B cell (primary cell): ENCODE measurements at regions of chr11 and their contacts with region 1.

Region 1: DNA sequence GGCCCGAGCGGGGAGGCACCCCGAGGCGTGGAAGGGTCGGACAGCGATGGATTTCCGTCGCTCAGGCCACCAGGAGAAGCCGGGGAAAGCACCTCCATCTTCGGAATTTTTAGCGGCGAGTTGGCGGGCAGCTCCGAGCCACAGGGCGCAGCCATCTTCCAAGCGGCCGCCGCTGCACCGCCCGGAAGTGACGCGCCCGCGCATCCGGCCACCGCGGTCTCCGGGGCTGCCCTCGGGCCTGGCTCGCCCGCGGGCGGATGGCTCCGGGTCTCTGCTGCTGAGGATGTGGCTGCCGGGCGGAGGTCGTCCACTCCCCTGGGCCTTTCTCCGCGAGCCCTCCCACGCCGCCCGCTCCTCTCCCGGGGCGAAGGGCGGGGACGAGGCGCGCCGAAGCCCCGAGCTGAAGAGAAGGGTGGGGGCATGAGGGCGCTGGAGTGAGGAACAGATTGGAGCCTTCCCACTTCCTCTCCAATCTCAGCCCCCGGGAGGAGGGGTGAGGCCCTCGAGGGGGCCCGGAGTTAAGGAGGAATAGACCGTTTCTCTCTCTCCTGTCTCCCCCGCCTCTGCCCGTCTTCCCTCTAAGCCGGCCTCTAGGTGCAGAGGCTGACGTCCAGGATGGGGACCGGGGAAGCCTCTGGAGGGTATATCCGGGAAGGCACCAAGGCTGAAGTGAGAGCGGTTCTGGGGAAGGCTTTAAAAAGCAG is at the start of gene MSANTD2:
- DNase-seq: peak; percentile 89
- ATAC-seq: peak; percentile 84
- H3K4me3 ChIP-seq: peak within 1 kb of the TSS; percentile 57 to 95 (median 91)
- H3K4me3 Mint-ChIP-seq: peak within 1 kb of the TSS; percentile 94
- H3K27ac ChIP-seq: peak within 1 kb of the TSS; percentile 96 to 99
- H3K27ac Mint-ChIP-seq: peak within 1 kb of the TSS; percentile 93
- H3K4me1 ChIP-seq: peaks cover 15 to 17% of the 10 kb centered on the region in 2 donors
- H3K4me1 Mint-ChIP-seq: peaks cover 22% of the 10 kb centered on the region
- H3K27me3 ChIP-seq: no peaks in the 10 kb centered on the region
- H3K27me3 Mint-ChIP-seq: no peaks in the 10 kb centered on the region
- CTCF ChIP-seq: peak; percentile 2
- total RNA-seq, gene MSANTD2: 26.8 and 33.4 TPM in 2 replicates

Region 2: GRCh38 chr11:124622531-124623451 is 177.6 kb before region 1 on chr11 and contains the start of gene TBRG1:
- CTCF ChIA-PET with region 1: interaction called, 3 read pairs
- POLR2A ChIA-PET with region 1: interaction called, 3 read pairs
- intact Hi-C with region 1: loop called (anchors 1 kb)
- DNase-seq: peak; percentile 89
- ATAC-seq: peak; percentile 97
- H3K4me3 ChIP-seq: peak within 1 kb of the TSS; percentile 75 to 98 (median 91)
- H3K4me3 Mint-ChIP-seq: peak within 1 kb of the TSS; percentile 99
- H3K27ac ChIP-seq: peak within 1 kb of the TSS; percentile 71 to 95
- H3K27ac Mint-ChIP-seq: peak within 1 kb of the TSS; percentile 97
- H3K4me1 ChIP-seq: peaks cover 15 to 17% of the 10 kb centered on the region in 2 donors
- H3K4me1 Mint-ChIP-seq: peaks cover 31% of the 10 kb centered on the region
- H3K27me3 ChIP-seq: peaks cover 0 to 13% (median 3%) of the 10 kb centered on the region in 4 experiments
- H3K27me3 Mint-ChIP-seq: peaks cover 24% of the 10 kb centered on the region
- CTCF ChIP-seq: no peak
- total RNA-seq, gene TBRG1: 66.8 and 71.5 TPM in 2 replicates

Region 3: DNA sequence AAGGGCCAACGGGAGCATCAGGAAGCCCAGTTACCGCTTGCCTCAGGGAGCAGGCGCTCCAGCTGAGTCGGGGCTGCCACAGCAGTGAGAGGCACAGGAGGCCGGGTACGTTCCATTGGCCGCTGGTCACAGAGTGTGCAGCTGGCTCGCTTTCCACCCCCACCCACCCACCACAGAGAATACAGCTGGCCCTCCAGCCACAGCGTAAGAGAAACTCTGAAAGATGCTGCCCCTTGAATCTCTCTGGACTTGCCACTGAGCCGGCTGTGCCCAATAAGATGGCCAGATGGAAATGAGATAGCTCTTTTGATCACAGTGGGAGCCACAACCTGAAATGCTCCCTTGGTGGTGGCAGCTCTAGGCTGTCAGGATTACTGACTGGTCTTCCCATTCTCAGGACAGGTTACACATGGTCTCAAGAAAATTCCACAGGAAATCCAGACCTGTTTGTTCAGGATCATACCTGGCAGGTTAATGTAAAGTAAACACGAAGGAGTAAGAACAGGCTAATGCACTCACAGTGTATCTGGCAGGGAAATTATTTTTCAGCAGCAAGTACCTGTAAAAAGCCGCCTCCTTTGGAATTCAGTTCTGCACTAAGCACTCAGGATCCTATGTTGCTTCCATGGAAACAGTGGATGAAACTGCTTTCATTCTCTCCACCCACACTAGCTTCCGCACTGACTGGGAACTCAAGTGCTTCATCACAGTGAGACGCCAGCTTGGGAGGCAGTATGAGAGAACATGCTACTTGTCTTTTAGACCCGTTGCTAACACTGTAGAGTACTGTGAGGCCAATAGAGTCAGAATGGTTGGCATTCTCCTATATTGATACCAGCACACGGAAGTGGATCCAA is 143.4 kb before region 1 on chr11:
- CTCF ChIA-PET with region 1: no interaction called
- POLR2A ChIA-PET with region 1: no interaction called
- intact Hi-C with region 1: no loop called
- DNase-seq: no peak
- ATAC-seq: no peak
- H3K4me3 ChIP-seq: no peak overlapping the region
- H3K4me3 Mint-ChIP-seq: no peak overlapping the region
- H3K27ac ChIP-seq: no peak overlapping the region
- H3K27ac Mint-ChIP-seq: no peak overlapping the region
- H3K4me1 ChIP-seq: no peaks in the 10 kb centered on the region
- H3K4me1 Mint-ChIP-seq: no peaks in the 10 kb centered on the region
- H3K27me3 ChIP-seq: no peaks in the 10 kb centered on the region
- H3K27me3 Mint-ChIP-seq: no peaks in the 10 kb centered on the region
- CTCF ChIP-seq: no peak

Region 4: GRCh38 chr11:124746621-124747243 is 53.6 kb before region 1 on chr11:
- CTCF ChIA-PET with region 1: interaction called, 8 read pairs
- POLR2A ChIA-PET with region 1: interaction called, 4 read pairs
- intact Hi-C with region 1: loop called (anchors 1 kb)
- DNase-seq: peak; percentile 90
- ATAC-seq: peak; percentile 90
- H3K4me3 ChIP-seq: peak overlapping the region; percentile 62 to 97 (median 83)
- H3K4me3 Mint-ChIP-seq: peak overlapping the region; percentile 99
- H3K27ac ChIP-seq: peak overlapping the region; percentile 43 to 59
- H3K27ac Mint-ChIP-seq: peak overlapping the region; percentile 97
- H3K4me1 ChIP-seq: peaks cover 24 to 42% of the 10 kb centered on the region in 2 donors
- H3K4me1 Mint-ChIP-seq: peaks cover 35% of the 10 kb centered on the region
- H3K27me3 ChIP-seq: peaks cover 0 to 3% (median 0%) of the 10 kb centered on the region in 4 experiments
- H3K27me3 Mint-ChIP-seq: no peaks in the 10 kb centered on the region
- CTCF ChIP-seq: peak; percentile 67

Region 5: DNA sequence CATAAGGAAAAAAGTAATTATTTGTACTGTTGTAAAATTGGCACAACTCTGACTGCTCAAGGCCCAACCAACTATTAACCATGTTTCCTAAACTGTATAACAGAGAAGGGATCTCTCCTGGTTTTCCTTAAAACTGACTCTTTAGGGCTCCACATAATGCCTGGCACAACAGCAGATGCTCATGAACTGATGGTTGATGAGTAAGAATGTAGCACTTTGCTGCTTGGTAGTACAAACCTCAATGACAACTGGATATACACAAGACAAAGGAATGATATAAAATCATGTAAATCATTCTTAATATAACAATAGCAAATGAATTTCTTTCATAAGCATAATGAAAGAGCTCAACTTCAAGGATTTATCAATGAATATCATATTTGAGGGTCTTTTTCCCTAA is 11.9 kb before region 1 on chr11:
- CTCF ChIA-PET with region 1: interaction called, 11 read pairs
- POLR2A ChIA-PET with region 1: no interaction called
- intact Hi-C with region 1: no loop called
- DNase-seq: no peak
- ATAC-seq: no peak
- H3K4me3 ChIP-seq: no peak overlapping the region
- H3K4me3 Mint-ChIP-seq: no peak overlapping the region
- H3K27ac ChIP-seq: no peak overlapping the region
- H3K27ac Mint-ChIP-seq: no peak overlapping the region
- H3K4me1 ChIP-seq: peaks cover 0 to 5% of the 10 kb centered on the region in 2 donors
- H3K4me1 Mint-ChIP-seq: peaks cover 16% of the 10 kb centered on the region
- H3K27me3 ChIP-seq: no peaks in the 10 kb centered on the region
- H3K27me3 Mint-ChIP-seq: no peaks in the 10 kb centered on the region
- CTCF ChIP-seq: no peak

Region 6: DNA sequence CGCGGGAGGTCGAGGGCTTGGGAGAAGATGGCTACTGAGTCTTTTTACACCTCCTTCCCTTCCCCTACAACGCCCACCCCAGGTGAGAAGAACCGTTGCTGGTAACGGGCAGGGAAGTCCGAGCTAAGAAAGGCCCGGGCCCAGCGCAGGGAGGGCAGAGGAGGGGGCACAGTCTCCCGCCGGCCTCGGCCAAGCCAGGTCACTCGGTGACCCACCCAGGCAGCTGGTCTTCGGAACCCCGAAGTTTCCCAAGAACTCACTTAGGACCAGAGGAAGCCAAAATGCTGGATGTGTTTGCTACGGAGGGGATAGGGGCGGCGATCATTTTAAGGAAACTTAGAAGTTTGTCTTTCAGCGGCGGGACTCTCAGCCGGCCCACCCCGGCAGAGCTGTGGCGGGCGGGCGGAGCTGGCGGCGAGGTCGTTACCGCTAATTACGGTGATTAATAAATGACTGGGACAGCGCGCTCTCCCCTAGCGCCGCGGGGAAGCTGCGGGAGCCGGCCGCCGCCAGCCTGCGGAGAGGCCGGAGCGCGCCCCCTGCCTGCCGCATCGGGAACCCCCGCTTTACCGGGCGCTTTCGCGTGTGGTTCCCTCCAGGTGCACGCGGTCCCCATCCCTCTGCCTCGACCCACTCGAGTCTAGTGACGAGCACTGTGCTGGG is 65.7 kb after region 1 on chr11:
- CTCF ChIA-PET with region 1: interaction called, 3 read pairs
- POLR2A ChIA-PET with region 1: no interaction called
- intact Hi-C with region 1: loop called (anchors 5 kb)
- DNase-seq: peak; percentile 67
- ATAC-seq: peak; percentile 66
- H3K4me3 ChIP-seq: peak overlapping the region in 2 of 5 experiments; percentile 11 to 20
- H3K4me3 Mint-ChIP-seq: peak overlapping the region; percentile 37
- H3K27ac ChIP-seq: no peak overlapping the region
- H3K27ac Mint-ChIP-seq: no peak overlapping the region
- H3K4me1 ChIP-seq: peaks cover 39 to 50% of the 10 kb centered on the region in 2 donors
- H3K4me1 Mint-ChIP-seq: peaks cover 23% of the 10 kb centered on the region
- H3K27me3 ChIP-seq: peaks cover 0 to 97% (median 69%) of the 10 kb centered on the region in 4 experiments
- H3K27me3 Mint-ChIP-seq: peaks cover 82% of the 10 kb centered on the region
- CTCF ChIP-seq: peak; percentile 71